CD14-positive monocyte (primary cell): ENCODE measurements at regions of chr6 and their contacts with region 1.

Region 1: GRCh38 chr6:26065952-26066380 is 21.3 kb upstream of the HFE start:
- DNase-seq: peak; percentile 70 to 82 (median 79)
- H3K4me3 ChIP-seq: peak overlapping the region in 1 of 3 experiments; percentile 15
- H3K4me3 Mint-ChIP-seq: peak overlapping the region in 1 of 2 donors; percentile 4
- H3K27ac ChIP-seq: no peak overlapping the region
- H3K27ac Mint-ChIP-seq: peak overlapping the region in 3 of 7 donors; percentile 12 to 70 (median 46)
- H3K4me1 ChIP-seq: peaks cover 10 to 13% of the 10 kb centered on the region in 2 donors
- H3K4me1 Mint-ChIP-seq: peaks cover 20% of the 10 kb centered on the region
- H3K27me3 ChIP-seq: no peaks in the 10 kb centered on the region
- H3K27me3 Mint-ChIP-seq: peaks cover 0 to 13% (median 6%) of the 10 kb centered on the region in 3 donors
- CTCF ChIP-seq: peak; percentile 90

Region 2: GRCh38 chr6:26097268-26097875 is 31.4 kb after region 1 on chr6:
- intact Hi-C with region 1: loop called (anchors 2 kb)
- DNase-seq: peak; percentile 44 to 70 (median 65)
- H3K4me3 ChIP-seq: no peak overlapping the region
- H3K4me3 Mint-ChIP-seq: no peak overlapping the region
- H3K27ac ChIP-seq: no peak overlapping the region
- H3K27ac Mint-ChIP-seq: no peak overlapping the region
- H3K4me1 ChIP-seq: peaks cover 24% of the 10 kb centered on the region in 2 donors
- H3K4me1 Mint-ChIP-seq: peaks cover 31% of the 10 kb centered on the region
- H3K27me3 ChIP-seq: no peaks in the 10 kb centered on the region
- H3K27me3 Mint-ChIP-seq: peaks cover 2 to 3% (median 3%) of the 10 kb centered on the region in 3 donors
- CTCF ChIP-seq: peak; percentile 89